ENCODE measurements at regions of chr9 and their contacts with region 1.

Region 1: DNA sequence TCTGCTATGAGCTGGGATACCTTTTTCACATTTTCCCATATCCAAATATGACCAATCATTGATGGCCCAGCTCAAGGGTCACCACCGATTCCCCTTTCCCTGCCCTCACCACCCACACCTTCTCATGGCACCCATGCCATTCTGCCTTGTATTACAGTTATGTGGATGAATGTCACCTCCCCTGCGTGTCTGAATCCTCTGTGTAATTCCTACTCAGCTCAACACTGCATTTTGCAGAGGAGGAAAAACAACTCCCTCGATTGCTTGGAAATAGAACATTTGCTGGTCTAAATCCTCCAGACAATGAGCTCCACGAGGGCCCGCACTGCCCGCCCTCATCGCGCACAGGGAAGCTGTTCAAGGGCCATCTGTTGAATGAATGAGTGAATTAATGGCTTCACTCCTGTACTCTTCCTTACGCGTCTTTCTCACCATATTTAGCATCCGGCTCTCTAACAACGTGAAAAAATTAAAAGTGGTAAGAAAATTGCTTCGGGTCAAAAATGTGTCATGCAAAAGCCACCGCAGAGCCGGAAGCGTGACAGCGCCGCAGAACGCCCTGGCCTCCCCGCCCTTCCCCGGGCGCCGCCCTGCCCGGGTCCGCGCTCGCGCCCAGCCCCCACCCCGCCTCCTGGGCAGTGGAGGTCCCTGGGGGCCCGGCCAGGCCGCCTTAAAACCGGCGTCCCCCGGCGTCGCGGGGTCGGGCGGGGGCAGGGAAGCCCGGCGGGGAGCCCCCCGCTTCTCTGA is 706 bp downstream of the SUSD1 start:
- DNase-seq: peak; percentile 62
- ATAC-seq: peak; percentile 87
- H3K4me3 Mint-ChIP-seq: peak overlapping the region; percentile 85
- H3K27ac Mint-ChIP-seq: peak overlapping the region; percentile 63
- H3K4me1 Mint-ChIP-seq: peaks cover 39% of the 10 kb centered on the region
- H3K27me3 Mint-ChIP-seq: no peaks in the 10 kb centered on the region
- CTCF ChIP-seq: no peak

Region 2: GRCh38 chr9:112104901-112105300 is 69.5 kb before region 1 on chr9:
- CTCF ChIA-PET with region 1: no interaction called
- POLR2A ChIA-PET with region 1: no interaction called
- intact Hi-C with region 1: loop called (anchors 5 kb)
- DNase-seq: no peak
- ATAC-seq: peak; percentile 81
- H3K4me3 Mint-ChIP-seq: peak overlapping the region; percentile 39
- H3K27ac Mint-ChIP-seq: peak overlapping the region; percentile 62
- H3K4me1 Mint-ChIP-seq: peaks cover 58% of the 10 kb centered on the region
- H3K27me3 Mint-ChIP-seq: no peaks in the 10 kb centered on the region
- CTCF ChIP-seq: no peak

Region 3: DNA sequence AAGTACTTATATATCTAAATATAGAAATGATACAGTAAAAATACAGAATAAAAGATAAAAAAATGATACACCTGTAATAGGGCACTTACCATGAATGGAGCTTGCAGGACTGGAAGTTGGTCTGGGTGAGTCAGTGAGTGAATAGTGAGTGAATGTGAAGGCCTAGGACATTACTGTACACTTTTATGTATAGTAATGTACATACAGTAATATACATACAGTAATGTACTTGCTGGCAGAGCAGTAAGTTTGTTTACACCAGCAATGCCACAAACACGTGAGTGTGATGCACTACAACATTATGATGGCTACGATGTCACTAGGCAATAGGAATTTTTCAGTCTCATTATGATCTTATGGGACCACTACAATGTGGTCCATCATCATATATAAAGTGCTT is 33.5 kb before region 1 on chr9:
- CTCF ChIA-PET with region 1: no interaction called
- POLR2A ChIA-PET with region 1: no interaction called
- intact Hi-C with region 1: loop called (anchors 5 kb)
- DNase-seq: no peak
- ATAC-seq: no peak
- H3K4me3 Mint-ChIP-seq: no peak overlapping the region
- H3K27ac Mint-ChIP-seq: peak overlapping the region; percentile 35
- H3K4me1 Mint-ChIP-seq: peaks cover 12% of the 10 kb centered on the region
- H3K27me3 Mint-ChIP-seq: no peaks in the 10 kb centered on the region
- CTCF ChIP-seq: no peak

Region 4: GRCh38 chr9:112162621-112163413 is 11.6 kb before region 1 on chr9:
- CTCF ChIA-PET with region 1: no interaction called
- POLR2A ChIA-PET with region 1: interaction called, 10 read pairs
- intact Hi-C with region 1: loop called (anchors 1 kb)
- DNase-seq: no peak
- ATAC-seq: peak; percentile 80
- H3K4me3 Mint-ChIP-seq: no peak overlapping the region
- H3K27ac Mint-ChIP-seq: peak overlapping the region; percentile 21
- H3K4me1 Mint-ChIP-seq: peaks cover 16% of the 10 kb centered on the region
- H3K27me3 Mint-ChIP-seq: no peaks in the 10 kb centered on the region
- CTCF ChIP-seq: no peak

Region 5: DNA sequence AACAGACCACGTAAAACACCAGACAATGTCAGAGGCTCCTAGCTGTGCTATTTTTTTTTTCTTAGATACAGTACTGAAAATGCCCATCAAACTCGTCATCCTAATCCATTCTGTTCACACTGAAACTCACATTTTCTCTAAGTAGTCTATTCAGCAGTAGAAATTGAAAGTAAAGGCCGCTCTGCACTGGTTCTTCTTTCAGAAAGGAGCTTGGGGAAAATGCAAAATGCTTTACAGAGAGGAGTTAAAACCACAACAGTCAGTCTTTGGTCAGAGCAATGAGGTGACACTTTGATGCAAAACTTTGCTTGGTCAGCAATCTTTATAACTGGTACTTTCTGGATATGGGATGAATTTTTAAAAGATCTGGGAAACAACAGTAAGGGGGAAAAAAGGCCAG is 44.5 kb after region 1 on chr9:
- CTCF ChIA-PET with region 1: no interaction called
- POLR2A ChIA-PET with region 1: no interaction called
- intact Hi-C with region 1: loop called (anchors 5 kb)
- DNase-seq: no peak
- ATAC-seq: peak; percentile 66
- H3K4me3 Mint-ChIP-seq: peak overlapping the region; percentile 1
- H3K27ac Mint-ChIP-seq: peak overlapping the region; percentile 26
- H3K4me1 Mint-ChIP-seq: peaks cover 20% of the 10 kb centered on the region
- H3K27me3 Mint-ChIP-seq: no peaks in the 10 kb centered on the region
- CTCF ChIP-seq: no peak

Region 6: DNA sequence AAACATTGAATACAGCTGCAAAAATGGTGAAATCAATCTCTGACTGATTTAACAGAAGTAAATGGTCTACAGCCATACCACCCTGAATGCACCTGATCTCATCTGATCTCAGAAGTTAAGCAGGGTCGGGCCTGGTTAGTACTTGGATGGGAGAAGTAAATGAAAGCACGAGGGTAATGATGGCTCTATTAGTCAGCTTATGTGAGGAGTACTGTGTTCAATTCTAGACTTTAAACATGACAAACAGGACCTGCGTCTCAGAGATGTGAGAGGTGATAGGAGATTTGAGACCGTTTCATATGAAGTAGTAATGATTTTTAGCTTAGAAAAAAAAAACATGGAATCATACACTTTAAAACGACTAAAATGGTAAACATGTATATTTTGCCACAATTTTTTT is 77.8 kb after region 1 on chr9:
- CTCF ChIA-PET with region 1: no interaction called
- POLR2A ChIA-PET with region 1: no interaction called
- intact Hi-C with region 1: no loop called
- DNase-seq: no peak
- ATAC-seq: no peak
- H3K4me3 Mint-ChIP-seq: no peak overlapping the region
- H3K27ac Mint-ChIP-seq: no peak overlapping the region
- H3K4me1 Mint-ChIP-seq: peaks cover 8% of the 10 kb centered on the region
- H3K27me3 Mint-ChIP-seq: no peaks in the 10 kb centered on the region
- CTCF ChIP-seq: no peak

Region 7: GRCh38 chr9:112271466-112272092 is 97.2 kb after region 1 on chr9:
- CTCF ChIA-PET with region 1: no interaction called
- POLR2A ChIA-PET with region 1: no interaction called
- intact Hi-C with region 1: no loop called
- DNase-seq: no peak
- ATAC-seq: no peak
- H3K4me3 Mint-ChIP-seq: no peak overlapping the region
- H3K27ac Mint-ChIP-seq: no peak overlapping the region
- H3K4me1 Mint-ChIP-seq: peaks cover 23% of the 10 kb centered on the region
- H3K27me3 Mint-ChIP-seq: no peaks in the 10 kb centered on the region
- CTCF ChIP-seq: no peak

Measured in activated B cell treated with CpG ODN at 0.5 μM for 24 hours (primary cell).